H1 (cell line): ENCODE measurements at regions of chrX and their contacts with region 1.

Region 1: GRCh38 chrX:21985332-21985777 is 44.8 kb downstream of the SMS start:
- DNase-seq: peak; percentile 15 to 68
- H3K4me3 ChIP-seq: no peak overlapping the region
- H3K27ac ChIP-seq: no peak overlapping the region
- H3K4me1 ChIP-seq: no peaks in the 10 kb centered on the region
- H3K27me3 ChIP-seq: no peaks in the 10 kb centered on the region
- CTCF ChIP-seq: peak in 2 of 3 experiments; percentile 84 to 93; a peak in 3 of 4 replicates
- EP300 ChIP-seq: no peak
- POLR2A ChIP-seq: no peak
- RAD21 ChIP-seq: peak; percentile 86 to 87

Region 2: GRCh38 chrX:21781525-21781924 is 203.8 kb before region 1 on chrX:
- CTCF ChIA-PET with region 1: no interaction called
- POLR2A ChIA-PET with region 1: no interaction called
- DNase-seq: no peak
- H3K4me3 ChIP-seq: no peak overlapping the region
- H3K27ac ChIP-seq: no peak overlapping the region
- H3K4me1 ChIP-seq: no peaks in the 10 kb centered on the region
- H3K27me3 ChIP-seq: no peaks in the 10 kb centered on the region
- CTCF ChIP-seq: no peak
- EP300 ChIP-seq: no peak
- POLR2A ChIP-seq: no peak
- RAD21 ChIP-seq: no peak

Region 3: DNA sequence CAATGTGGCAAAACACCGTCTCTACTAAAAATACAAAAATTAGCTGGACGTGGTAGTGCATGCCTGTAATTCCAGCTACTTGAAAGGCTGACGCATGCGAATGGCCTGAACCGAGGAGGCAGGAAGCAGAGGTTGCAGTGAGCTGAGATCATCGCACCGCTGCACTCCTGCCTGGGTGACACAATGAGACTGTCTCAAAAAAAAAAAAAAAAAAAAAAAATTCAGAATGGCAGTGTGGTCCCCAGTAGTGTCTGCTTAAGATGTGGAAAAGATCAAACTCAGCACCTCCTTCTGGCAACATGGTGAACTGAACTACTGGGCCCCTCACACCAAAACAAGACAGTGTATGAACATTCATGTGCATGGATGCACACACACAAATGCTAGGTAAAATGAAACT is 12.6 kb before region 1 on chrX:
- CTCF ChIA-PET with region 1: interaction called, 12 read pairs
- POLR2A ChIA-PET with region 1: no interaction called
- DNase-seq: peak in 1 of 2 experiments; percentile 3
- H3K4me3 ChIP-seq: no peak overlapping the region
- H3K27ac ChIP-seq: no peak overlapping the region
- H3K4me1 ChIP-seq: no peaks in the 10 kb centered on the region
- H3K27me3 ChIP-seq: no peaks in the 10 kb centered on the region
- CTCF ChIP-seq: no peak
- EP300 ChIP-seq: no peak
- POLR2A ChIP-seq: no peak
- RAD21 ChIP-seq: peak; percentile 16 to 35; a peak in 3 of 4 replicates

Region 4: DNA sequence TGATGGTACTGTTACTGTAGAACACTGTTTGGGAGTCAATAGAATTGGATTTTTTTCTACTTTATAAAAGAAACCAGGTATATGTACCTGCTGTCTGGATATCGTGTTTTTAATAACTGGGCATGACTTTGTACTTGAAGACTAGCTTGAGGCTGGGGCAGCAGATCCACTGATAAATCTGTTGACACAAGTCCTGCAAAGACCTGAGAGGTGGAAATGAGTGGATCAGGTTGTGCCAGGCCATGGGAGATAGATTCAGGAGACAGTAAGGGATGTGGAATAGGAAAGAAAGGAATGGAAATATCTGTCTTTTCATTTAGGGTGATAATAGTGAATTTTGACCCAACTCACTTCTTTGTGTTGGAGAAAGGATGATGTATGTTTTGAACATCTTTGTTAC is 10.8 kb after region 1 on chrX:
- CTCF ChIA-PET with region 1: interaction called, 12 read pairs
- POLR2A ChIA-PET with region 1: interaction called, 5 read pairs
- DNase-seq: no peak
- H3K4me3 ChIP-seq: no peak overlapping the region
- H3K27ac ChIP-seq: no peak overlapping the region
- H3K4me1 ChIP-seq: no peaks in the 10 kb centered on the region
- H3K27me3 ChIP-seq: no peaks in the 10 kb centered on the region
- CTCF ChIP-seq: no peak
- EP300 ChIP-seq: no peak
- POLR2A ChIP-seq: no peak
- RAD21 ChIP-seq: no peak